Endothelial cell of umbilical vein (primary cell): ENCODE measurements at regions of chr17 and their contacts with region 1.

Region 1: GRCh38 chr17:5592382-5592781 is 8.1 kb upstream of the NLRP1 start:
- DNase-seq: peak; percentile 55
- H3K4me3 ChIP-seq: no peak overlapping the region
- H3K27ac ChIP-seq: no peak overlapping the region
- H3K4me1 ChIP-seq: no peaks in the 10 kb centered on the region
- H3K27me3 ChIP-seq: peaks cover 0 to 5% of the 10 kb centered on the region in 2 experiments
- CTCF ChIP-seq: peak; percentile 33 to 38
- POLR2A ChIP-seq: no peak

Region 2: DNA sequence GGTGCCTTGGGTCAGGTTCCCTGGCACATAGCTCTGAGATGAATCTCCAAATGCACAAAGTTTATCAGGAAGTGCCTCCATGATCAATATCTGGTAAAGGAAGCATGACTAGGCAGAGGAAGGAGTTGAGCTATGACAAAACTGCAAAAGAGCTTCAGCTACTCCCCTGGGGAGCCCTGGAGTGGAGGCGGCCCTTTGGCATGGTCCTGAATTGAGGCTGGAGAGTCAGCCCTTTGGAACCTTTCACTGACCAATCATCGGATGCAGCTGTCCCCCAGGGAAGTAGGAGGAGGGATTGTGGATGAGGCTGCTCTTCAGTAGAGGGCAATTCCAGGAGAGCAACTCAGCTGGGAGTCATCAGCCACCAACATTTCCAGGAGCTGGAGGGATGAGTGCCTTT is 38.1 kb after region 1 on chr17:
- CTCF ChIA-PET with region 1: interaction called, 13 read pairs
- POLR2A ChIA-PET with region 1: no interaction called
- dilution Hi-C with region 1: no loop called
- intact Hi-C with region 1: no loop called
- DNase-seq: peak; percentile 73
- H3K4me3 ChIP-seq: no peak overlapping the region
- H3K27ac ChIP-seq: peak overlapping the region; percentile 25
- H3K4me1 ChIP-seq: peaks cover 19% of the 10 kb centered on the region
- H3K27me3 ChIP-seq: no peaks in the 10 kb centered on the region
- CTCF ChIP-seq: no peak
- POLR2A ChIP-seq: no peak

Region 3: DNA sequence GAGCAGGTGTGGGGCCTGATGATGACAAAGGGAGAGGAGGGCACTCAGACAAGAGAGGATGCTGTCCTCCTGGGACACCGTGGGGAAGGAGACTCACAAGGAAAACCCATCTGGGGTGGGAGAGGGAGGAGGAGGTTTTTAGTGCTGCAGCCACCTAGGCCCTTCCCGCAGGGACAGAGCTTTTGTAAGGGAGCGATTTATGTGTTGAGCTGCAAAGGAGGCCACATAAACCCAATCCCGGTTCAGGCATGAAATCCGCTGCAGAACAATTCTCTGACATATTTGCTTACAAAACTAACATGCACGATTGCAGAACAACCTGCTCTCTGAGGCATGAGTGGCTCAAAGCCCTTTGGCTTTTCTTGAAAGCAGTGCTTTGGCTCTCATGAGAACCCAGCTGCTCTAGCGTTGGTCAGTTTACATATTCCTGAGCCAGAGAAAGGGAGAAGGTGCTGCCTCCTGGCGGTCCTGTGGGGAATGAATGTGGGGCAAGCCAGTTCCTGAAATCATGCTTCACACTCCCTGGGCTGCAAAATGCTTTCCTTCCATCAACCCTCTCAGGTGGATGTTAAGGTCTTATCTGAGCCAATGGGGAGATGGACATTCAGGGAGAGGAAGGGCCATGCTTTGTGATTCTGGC is 114.3 kb after region 1 on chr17:
- CTCF ChIA-PET with region 1: interaction called, 132 read pairs
- POLR2A ChIA-PET with region 1: no interaction called
- dilution Hi-C with region 1: no loop called
- intact Hi-C with region 1: loop called (anchors 1 kb)
- DNase-seq: peak; percentile 68
- H3K4me3 ChIP-seq: no peak overlapping the region
- H3K27ac ChIP-seq: no peak overlapping the region
- H3K4me1 ChIP-seq: no peaks in the 10 kb centered on the region
- H3K27me3 ChIP-seq: peaks cover 0 to 5% of the 10 kb centered on the region in 2 experiments
- CTCF ChIP-seq: peak; percentile 72 to 81
- POLR2A ChIP-seq: no peak

Region 4: GRCh38 chr17:6413065-6413464 is 820.7 kb after region 1 on chr17:
- CTCF ChIA-PET with region 1: interaction called, 29 read pairs
- POLR2A ChIA-PET with region 1: no interaction called
- dilution Hi-C with region 1: no loop called
- intact Hi-C with region 1: no loop called
- DNase-seq: peak; percentile 67
- H3K4me3 ChIP-seq: no peak overlapping the region
- H3K27ac ChIP-seq: no peak overlapping the region
- H3K4me1 ChIP-seq: no peaks in the 10 kb centered on the region
- H3K27me3 ChIP-seq: no peaks in the 10 kb centered on the region
- CTCF ChIP-seq: peak; percentile 50 to 56
- POLR2A ChIP-seq: no peak

Region 5: DNA sequence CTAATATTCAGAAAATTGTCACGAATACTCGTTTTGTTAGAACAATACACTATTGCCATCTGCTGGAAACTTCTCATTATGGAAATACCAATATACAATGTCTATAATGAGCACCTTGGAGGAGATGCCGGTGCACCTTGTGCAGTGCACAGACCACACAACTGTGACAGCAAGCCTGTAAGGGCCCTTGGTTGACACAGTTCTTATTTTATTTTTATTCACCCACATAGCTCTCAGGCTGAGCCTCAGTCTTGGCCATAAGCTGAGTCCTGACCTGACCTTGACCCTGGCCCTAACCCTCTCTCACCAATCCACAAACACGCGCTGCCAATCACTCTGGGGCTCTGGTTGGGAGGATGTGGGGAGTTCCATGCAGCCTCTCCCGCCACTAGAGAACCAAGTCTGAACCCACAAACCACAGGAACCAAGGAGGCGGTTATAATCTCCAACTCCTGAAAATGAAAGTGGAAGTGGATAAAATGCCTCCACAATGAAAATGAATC is 834.9 kb after region 1 on chr17:
- CTCF ChIA-PET with region 1: interaction called, 93 read pairs
- POLR2A ChIA-PET with region 1: no interaction called
- dilution Hi-C with region 1: no loop called
- intact Hi-C with region 1: loop called (anchors 1 kb)
- DNase-seq: no peak
- H3K4me3 ChIP-seq: no peak overlapping the region
- H3K27ac ChIP-seq: no peak overlapping the region
- H3K4me1 ChIP-seq: no peaks in the 10 kb centered on the region
- H3K27me3 ChIP-seq: no peaks in the 10 kb centered on the region
- CTCF ChIP-seq: no peak
- POLR2A ChIP-seq: no peak